Sigmoid colon (tissue), 7 donors: ENCODE measurements at regions of chr4 and their contacts with region 1.

Region 1: DNA sequence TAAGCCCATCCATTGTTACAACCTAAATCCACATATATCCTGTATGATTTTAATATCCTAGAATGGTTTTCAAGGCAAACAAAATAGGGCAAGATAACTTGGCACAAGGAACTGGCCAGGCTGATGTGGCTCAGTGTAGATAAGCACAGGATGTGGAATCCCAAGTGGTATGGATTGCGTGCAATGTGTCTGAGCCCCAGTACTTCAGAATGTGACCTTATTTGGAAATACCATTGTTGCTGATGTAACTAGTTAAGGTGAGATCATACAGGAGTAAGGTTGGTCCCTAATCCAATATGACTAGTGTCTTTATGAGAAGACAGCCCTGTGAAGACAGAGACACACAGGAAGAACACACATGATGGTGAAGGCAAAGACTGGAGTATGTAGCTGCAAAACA is 72.4 kb downstream of the IL21 start:
- DNase-seq: no peak
- H3K4me3 ChIP-seq: no peak overlapping the region
- H3K27ac ChIP-seq: no peak overlapping the region
- H3K4me1 ChIP-seq: no peaks in the 10 kb centered on the region
- H3K27me3 ChIP-seq: no peaks in the 10 kb centered on the region
- CTCF ChIP-seq: no peak
- EP300 ChIP-seq: no peak
- POLR2A ChIP-seq: no peak

Region 2: DNA sequence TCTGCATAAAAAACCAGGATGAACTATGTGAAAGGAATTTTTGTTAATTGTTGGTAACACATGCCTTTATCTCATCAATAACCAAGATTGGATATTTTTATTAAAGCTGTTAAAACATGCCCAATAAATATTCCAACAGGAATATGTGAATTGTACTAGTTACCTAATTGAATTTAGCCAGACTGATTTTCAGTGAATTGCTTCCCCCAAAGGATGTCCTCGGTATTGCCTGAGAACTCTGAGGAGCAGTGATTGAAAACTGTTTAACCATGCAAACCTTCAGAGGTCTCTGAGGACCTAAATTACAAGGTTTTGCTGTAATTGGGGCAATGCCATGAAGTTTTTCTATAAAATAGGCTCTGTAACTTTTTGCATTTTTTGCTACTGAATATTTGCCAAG is 329.7 kb before region 1 on chr4:
- intact Hi-C with region 1: no loop called
- DNase-seq: no peak
- H3K4me3 ChIP-seq: no peak overlapping the region
- H3K27ac ChIP-seq: no peak overlapping the region
- H3K4me1 ChIP-seq: no peaks in the 10 kb centered on the region
- H3K27me3 ChIP-seq: no peaks in the 10 kb centered on the region
- CTCF ChIP-seq: peak in 1 of 4 experiments; percentile 12
- EP300 ChIP-seq: no peak
- POLR2A ChIP-seq: no peak

Region 3: GRCh38 chr4:122329876-122330565 is 218.4 kb before region 1 on chr4:
- intact Hi-C with region 1: no loop called
- DNase-seq: no peak
- H3K4me3 ChIP-seq: no peak overlapping the region
- H3K27ac ChIP-seq: no peak overlapping the region
- H3K4me1 ChIP-seq: no peaks in the 10 kb centered on the region
- H3K27me3 ChIP-seq: no peaks in the 10 kb centered on the region
- CTCF ChIP-seq: no peak
- EP300 ChIP-seq: no peak
- POLR2A ChIP-seq: no peak

Region 4: GRCh38 chr4:123291329-123291728 is 742.9 kb after region 1 on chr4:
- intact Hi-C with region 1: loop called (anchors 5 kb)
- DNase-seq: no peak
- H3K4me3 ChIP-seq: no peak overlapping the region
- H3K27ac ChIP-seq: no peak overlapping the region
- H3K4me1 ChIP-seq: no peaks in the 10 kb centered on the region
- H3K27me3 ChIP-seq: no peaks in the 10 kb centered on the region
- CTCF ChIP-seq: no peak
- EP300 ChIP-seq: no peak
- POLR2A ChIP-seq: no peak